ENCODE measurements at regions of chr2 and their contacts with region 1.

Region 1: DNA sequence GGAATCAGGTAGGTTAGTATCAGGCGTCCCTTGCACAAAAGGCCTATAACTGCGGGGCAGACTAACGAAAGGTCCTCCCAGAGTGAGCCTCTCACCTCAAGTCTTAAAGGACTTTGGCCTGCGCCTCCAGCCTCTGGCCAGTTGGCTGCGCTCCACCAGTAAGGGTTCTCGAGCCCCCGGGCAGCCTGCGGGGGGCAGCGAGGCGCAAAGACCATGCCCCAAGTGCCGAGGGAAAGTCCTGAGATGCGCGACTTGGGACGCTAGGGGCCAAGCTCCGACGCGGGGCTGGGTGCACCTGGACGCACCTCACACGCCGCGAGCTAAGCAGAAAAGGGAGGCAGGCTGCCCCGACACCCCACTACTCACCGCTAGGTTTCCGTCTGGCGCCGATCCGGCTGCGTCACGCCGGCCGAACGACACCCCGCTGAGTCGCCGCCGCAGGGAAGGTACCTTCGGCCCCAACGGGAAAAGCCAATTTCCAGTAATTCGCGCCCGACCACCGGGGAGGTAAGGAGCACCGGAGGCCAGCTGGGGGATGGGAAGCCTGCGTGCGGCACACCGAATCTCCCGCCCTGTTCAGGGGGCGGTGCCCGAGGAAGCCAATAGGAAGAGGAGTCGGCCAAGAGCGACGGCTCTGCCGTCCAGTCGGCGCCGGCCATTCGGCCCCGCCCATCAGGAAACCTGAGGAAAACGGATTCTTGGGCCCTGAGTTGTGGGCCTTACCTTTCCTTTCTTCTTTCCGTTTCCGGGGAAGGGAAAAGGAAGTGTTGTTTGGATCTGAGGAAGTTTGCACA is at the start of gene ORC2:
- DNase-seq: peak; percentile 91
- ATAC-seq: peak; percentile 99
- H3K4me3 ChIP-seq: peak within 1 kb of the TSS; percentile 90
- H3K27ac ChIP-seq: peak within 1 kb of the TSS; percentile 82
- H3K4me1 ChIP-seq: peaks cover 6% of the 10 kb centered on the region; the same call in 1 of the 2 replicates
- H3K27me3 ChIP-seq: no peaks in the 10 kb centered on the region
- CTCF ChIP-seq: peak; percentile 18; the same call in 1 of the 2 replicates
- POLR2A ChIP-seq: no peak; the same call in 1 of the 2 replicates
- RAD21 ChIP-seq: no peak
- total RNA-seq, gene ORC2: 10.0 and 13.3 TPM in 2 replicates

Region 2: GRCh38 chr2:200950378-200950777 is 12.9 kb before region 1 on chr2:
- CTCF ChIA-PET with region 1: interaction called, 5 read pairs
- POLR2A ChIA-PET with region 1: interaction called, 15 read pairs
- dilution Hi-C with region 1: no loop called
- in situ Hi-C with region 1: no loop called
- intact Hi-C with region 1: no loop called
- DNase-seq: no peak
- ATAC-seq: no peak
- H3K4me3 ChIP-seq: no peak overlapping the region
- H3K27ac ChIP-seq: no peak overlapping the region
- H3K4me1 ChIP-seq: no peaks in the 10 kb centered on the region; the same call in 1 of the 2 replicates
- H3K27me3 ChIP-seq: no peaks in the 10 kb centered on the region
- CTCF ChIP-seq: no peak
- POLR2A ChIP-seq: no peak
- RAD21 ChIP-seq: no peak

Region 3: DNA sequence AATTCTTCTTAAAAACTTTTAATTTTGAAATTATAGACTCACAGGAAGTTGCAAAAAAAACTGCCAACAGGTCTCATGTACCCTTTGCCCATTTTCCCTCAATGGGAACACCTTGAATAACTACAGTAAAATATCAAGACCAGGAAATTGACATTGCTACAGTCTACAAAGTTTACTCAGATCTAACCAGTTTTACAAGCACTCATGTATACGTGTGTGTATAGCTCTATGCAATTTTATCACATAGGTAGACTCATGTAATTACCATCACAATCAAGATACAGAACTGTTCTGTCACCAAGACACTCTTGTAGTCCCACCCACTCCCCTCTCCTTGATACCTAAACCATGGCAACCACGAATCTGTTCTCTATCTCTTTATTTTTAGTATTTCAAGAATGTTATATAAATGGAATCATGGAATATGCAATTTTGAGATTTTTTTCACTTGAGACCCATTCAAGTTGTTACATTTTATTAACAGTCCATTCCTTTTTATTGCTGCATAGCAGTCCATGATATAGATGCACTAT is 101.5 kb after region 1 on chr2:
- CTCF ChIA-PET with region 1: interaction called, 9 read pairs
- POLR2A ChIA-PET with region 1: interaction called, 3 read pairs
- dilution Hi-C with region 1: no loop called
- in situ Hi-C with region 1: no loop called
- intact Hi-C with region 1: loop called (anchors 5 kb)
- DNase-seq: no peak
- ATAC-seq: no peak
- H3K4me3 ChIP-seq: no peak overlapping the region
- H3K27ac ChIP-seq: no peak overlapping the region
- H3K4me1 ChIP-seq: no peaks in the 10 kb centered on the region
- H3K27me3 ChIP-seq: no peaks in the 10 kb centered on the region
- CTCF ChIP-seq: no peak
- POLR2A ChIP-seq: no peak
- RAD21 ChIP-seq: no peak

Region 4: GRCh38 chr2:201118121-201118960 is 155.0 kb after region 1 on chr2:
- CTCF ChIA-PET with region 1: no interaction called
- POLR2A ChIA-PET with region 1: no interaction called
- dilution Hi-C with region 1: no loop called
- in situ Hi-C with region 1: no loop called
- intact Hi-C with region 1: no loop called
- DNase-seq: peak; percentile 78
- ATAC-seq: peak; percentile 35
- H3K4me3 ChIP-seq: peak overlapping the region; percentile 64
- H3K27ac ChIP-seq: peak overlapping the region; percentile 92
- H3K4me1 ChIP-seq: peaks cover 4% of the 10 kb centered on the region
- H3K27me3 ChIP-seq: no peaks in the 10 kb centered on the region
- CTCF ChIP-seq: peak; percentile 56
- POLR2A ChIP-seq: no peak
- RAD21 ChIP-seq: peak; percentile 42; the same call in 1 of the 2 replicates